H1 (cell line): ENCODE measurements at regions of chr11 and their contacts with region 1.

Region 1: DNA sequence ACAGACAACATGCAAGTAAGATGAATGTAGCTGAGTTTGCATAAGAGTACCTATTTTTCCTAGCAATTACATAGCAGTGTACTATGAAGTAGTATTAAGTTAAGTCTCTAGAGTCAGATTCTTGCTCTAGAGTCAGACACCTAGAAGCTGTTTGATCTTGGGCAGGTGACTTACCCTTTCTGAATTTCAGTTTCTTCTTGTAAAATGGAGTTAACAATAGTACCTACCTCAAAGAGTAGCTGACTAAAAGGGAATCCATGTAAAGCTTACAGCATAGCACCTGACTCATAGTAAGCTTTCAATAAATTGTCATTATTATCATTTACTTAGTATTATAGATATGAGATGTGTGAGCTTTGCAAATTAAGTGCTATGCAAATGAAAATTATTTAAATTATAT is 47.8 kb upstream of the PTPRJ start:
- DNase-seq: no peak
- H3K4me3 ChIP-seq: no peak overlapping the region
- H3K27ac ChIP-seq: no peak overlapping the region
- H3K4me1 ChIP-seq: peaks cover 0 to 3% (median under 1%) of the 10 kb centered on the region in 4 experiments; a peak in 4 of 7 replicates
- H3K27me3 ChIP-seq: no peaks in the 10 kb centered on the region
- CTCF ChIP-seq: no peak
- EP300 ChIP-seq: no peak
- POLR2A ChIP-seq: no peak
- RAD21 ChIP-seq: no peak

Region 2: GRCh38 chr11:47565340-47566148 is 367.0 kb before region 1 on chr11 and contains the start of gene PTPMT1:
- CTCF ChIA-PET with region 1: no interaction called
- POLR2A ChIA-PET with region 1: no interaction called
- DNase-seq: peak in 1 of 2 experiments; percentile 86
- H3K4me3 ChIP-seq: peak within 1 kb of the TSS; percentile 44 to 96 (median 95)
- H3K27ac ChIP-seq: peak within 1 kb of the TSS; percentile 53
- H3K4me1 ChIP-seq: peaks cover 0 to 3% (median 1%) of the 10 kb centered on the region in 4 experiments; a peak in 1 of 7 replicates
- H3K27me3 ChIP-seq: no peaks in the 10 kb centered on the region
- CTCF ChIP-seq: 0 out of 4 replicates have a peak, but pooled peaks of 1 of the 3 experiments have one; percentile 1
- EP300 ChIP-seq: peak in 1 of 2 experiments; percentile 9; a peak in 1 of 3 replicates
- POLR2A ChIP-seq: peak; percentile 48 to 82
- RAD21 ChIP-seq: no peak
- total RNA-seq, gene PTPMT1: 44.8 and 48.4 TPM in 2 replicates

Region 3: GRCh38 chr11:47918882-47919495 is 13.6 kb before region 1 on chr11:
- CTCF ChIA-PET with region 1: interaction called, 12 read pairs
- POLR2A ChIA-PET with region 1: interaction called, 3 read pairs
- DNase-seq: no peak
- H3K4me3 ChIP-seq: no peak overlapping the region
- H3K27ac ChIP-seq: no peak overlapping the region
- H3K4me1 ChIP-seq: peaks cover 0 to 4% (median 2%) of the 10 kb centered on the region in 4 experiments; a peak in 2 of 7 replicates
- H3K27me3 ChIP-seq: no peaks in the 10 kb centered on the region
- CTCF ChIP-seq: no peak
- EP300 ChIP-seq: no peak
- POLR2A ChIP-seq: no peak
- RAD21 ChIP-seq: no peak

Region 4: GRCh38 chr11:47946682-47947575 is 14.4 kb after region 1 on chr11:
- CTCF ChIA-PET with region 1: interaction called, 20 read pairs
- POLR2A ChIA-PET with region 1: interaction called, 3 read pairs
- DNase-seq: no peak
- H3K4me3 ChIP-seq: no peak overlapping the region
- H3K27ac ChIP-seq: no peak overlapping the region
- H3K4me1 ChIP-seq: peaks cover 0 to 12% (median 7%) of the 10 kb centered on the region in 4 experiments; a peak in 6 of 7 replicates
- H3K27me3 ChIP-seq: no peaks in the 10 kb centered on the region
- CTCF ChIP-seq: no peak
- EP300 ChIP-seq: no peak
- POLR2A ChIP-seq: no peak
- RAD21 ChIP-seq: no peak

Region 5: DNA sequence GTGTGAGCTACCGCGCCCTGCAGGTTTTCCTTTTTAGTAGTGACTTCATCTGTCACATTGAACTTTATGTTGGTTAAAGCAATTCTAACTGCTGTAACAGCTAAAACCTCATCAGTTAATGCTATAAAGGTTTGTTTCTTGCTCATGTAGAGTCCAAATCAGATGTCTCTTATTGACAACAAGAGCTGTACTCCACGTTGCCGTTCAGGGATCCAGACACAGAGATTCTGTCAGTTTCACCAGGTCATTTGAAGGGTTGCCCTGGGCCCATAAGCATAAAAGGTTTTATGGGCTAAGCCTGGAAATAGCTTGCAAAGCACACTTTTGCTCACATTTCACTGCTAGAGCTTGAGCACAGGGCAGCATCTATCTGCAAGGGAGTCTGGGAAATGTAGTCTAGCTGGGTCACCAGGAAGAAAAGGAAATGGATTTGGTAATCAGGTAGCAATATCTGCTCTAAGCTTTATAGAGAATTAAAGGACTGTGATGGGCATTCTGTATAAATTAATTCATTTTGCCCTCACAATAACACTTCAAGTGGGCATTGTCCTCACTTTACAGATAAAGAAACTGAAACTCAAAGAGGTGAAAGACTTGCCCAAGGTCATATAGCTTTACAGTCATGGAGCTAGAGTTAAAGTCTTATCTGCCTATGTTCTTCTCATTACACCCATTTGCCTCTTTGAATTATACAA is 22.7 kb after region 1 on chr11:
- CTCF ChIA-PET with region 1: interaction called, 10 read pairs
- POLR2A ChIA-PET with region 1: no interaction called
- DNase-seq: no peak
- H3K4me3 ChIP-seq: no peak overlapping the region
- H3K27ac ChIP-seq: no peak overlapping the region
- H3K4me1 ChIP-seq: no peaks in the 10 kb centered on the region
- H3K27me3 ChIP-seq: no peaks in the 10 kb centered on the region
- CTCF ChIP-seq: no peak
- EP300 ChIP-seq: no peak
- POLR2A ChIP-seq: no peak
- RAD21 ChIP-seq: no peak

Region 6: GRCh38 chr11:48055292-48056132 is 123.0 kb after region 1 on chr11:
- CTCF ChIA-PET with region 1: interaction called, 11 read pairs
- POLR2A ChIA-PET with region 1: no interaction called
- DNase-seq: no peak
- H3K4me3 ChIP-seq: no peak overlapping the region
- H3K27ac ChIP-seq: peak overlapping the region; percentile 28; the same call in 1 of the 2 replicates
- H3K4me1 ChIP-seq: peaks cover 4 to 26% (median 21%) of the 10 kb centered on the region in 4 experiments
- H3K27me3 ChIP-seq: no peaks in the 10 kb centered on the region
- CTCF ChIP-seq: no peak
- EP300 ChIP-seq: no peak
- POLR2A ChIP-seq: no peak
- RAD21 ChIP-seq: no peak

Region 7: GRCh38 chr11:48097041-48097476 is 164.5 kb after region 1 on chr11:
- CTCF ChIA-PET with region 1: interaction called, 11 read pairs
- POLR2A ChIA-PET with region 1: interaction called, 3 read pairs
- DNase-seq: peak in 1 of 2 experiments; percentile 52
- H3K4me3 ChIP-seq: no peak overlapping the region
- H3K27ac ChIP-seq: peak overlapping the region; percentile 17; the same call in 1 of the 2 replicates
- H3K4me1 ChIP-seq: peaks cover 0 to 17% (median 14%) of the 10 kb centered on the region in 4 experiments; a peak in 6 of 7 replicates
- H3K27me3 ChIP-seq: no peaks in the 10 kb centered on the region
- CTCF ChIP-seq: peak in 2 of 3 experiments; percentile 43 to 44; a peak in 2 of 4 replicates
- EP300 ChIP-seq: no peak
- POLR2A ChIP-seq: no peak
- RAD21 ChIP-seq: peak in 1 of 2 experiments; percentile 43; a peak in 1 of 4 replicates